ENCODE measurements at regions of chr7 and their contacts with region 1.

Region 1: DNA sequence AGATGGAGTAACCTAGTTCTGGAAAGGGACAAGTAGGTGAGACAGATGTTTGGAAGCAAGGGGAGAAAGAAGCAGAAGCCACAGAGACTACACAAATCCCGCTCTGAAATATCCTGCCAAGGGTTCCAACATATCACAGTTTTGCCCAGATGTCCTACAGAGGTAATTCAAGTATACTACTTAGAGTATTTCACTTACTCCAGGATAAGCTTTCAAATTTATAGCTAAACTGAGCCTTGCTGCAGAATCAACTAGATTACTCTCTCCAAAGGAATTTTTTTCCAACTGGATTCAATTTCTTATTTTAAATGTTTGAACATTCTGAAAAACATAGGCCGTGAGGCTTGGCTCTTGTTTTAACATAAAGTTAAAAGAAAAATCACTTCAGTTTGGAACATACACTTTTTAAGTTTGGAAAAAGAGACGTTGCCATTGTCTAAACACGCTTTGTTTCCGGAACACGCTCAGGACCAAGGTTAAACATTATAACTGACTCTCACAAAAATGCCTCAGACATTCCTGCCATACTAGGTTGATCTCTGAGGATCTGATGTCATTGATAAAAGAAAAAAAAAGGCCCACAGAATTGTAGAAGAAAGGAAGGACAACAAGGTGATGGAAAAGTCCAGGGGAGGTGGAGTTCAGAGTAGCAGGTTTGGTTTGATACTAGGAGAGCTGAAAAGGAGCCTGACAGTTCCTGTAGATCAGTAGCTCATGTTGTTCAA is 74.8 kb downstream of the FAM185A start:
- DNase-seq: no peak
- ATAC-seq: no peak
- H3K4me3 ChIP-seq: no peak overlapping the region
- H3K27ac ChIP-seq: no peak overlapping the region
- H3K4me1 ChIP-seq: no peaks in the 10 kb centered on the region
- H3K27me3 ChIP-seq: no peaks in the 10 kb centered on the region
- CTCF ChIP-seq: no peak
- EP300 ChIP-seq: no peak
- POLR2A ChIP-seq: no peak
- RAD21 ChIP-seq: no peak

Region 2: GRCh38 chr7:102874166-102874829 is 50.7 kb after region 1 on chr7:
- CTCF ChIA-PET with region 1: no interaction called
- POLR2A ChIA-PET with region 1: no interaction called
- RAD21 ChIA-PET with region 1: no interaction called
- SMC1A ChIA-PET with region 1: no interaction called
- in situ Hi-C with region 1: no loop called
- intact Hi-C with region 1: loop called (anchors 2 kb)
- DNase-seq: peak; percentile 51
- ATAC-seq: peak; percentile 99
- H3K4me3 ChIP-seq: no peak overlapping the region
- H3K27ac ChIP-seq: no peak overlapping the region
- H3K4me1 ChIP-seq: no peaks in the 10 kb centered on the region
- H3K27me3 ChIP-seq: no peaks in the 10 kb centered on the region; a peak in 1 of 4 replicates
- CTCF ChIP-seq: no peak
- EP300 ChIP-seq: no peak
- POLR2A ChIP-seq: no peak
- RAD21 ChIP-seq: no peak

Region 3: GRCh38 chr7:103009466-103010185 is 186.1 kb after region 1 on chr7:
- CTCF ChIA-PET with region 1: no interaction called
- POLR2A ChIA-PET with region 1: no interaction called
- RAD21 ChIA-PET with region 1: no interaction called
- SMC1A ChIA-PET with region 1: no interaction called
- in situ Hi-C with region 1: no loop called
- intact Hi-C with region 1: no loop called
- DNase-seq: no peak
- ATAC-seq: no peak
- H3K4me3 ChIP-seq: no peak overlapping the region
- H3K27ac ChIP-seq: no peak overlapping the region
- H3K4me1 ChIP-seq: no peaks in the 10 kb centered on the region
- H3K27me3 ChIP-seq: no peaks in the 10 kb centered on the region
- CTCF ChIP-seq: no peak
- EP300 ChIP-seq: no peak
- POLR2A ChIP-seq: no peak
- RAD21 ChIP-seq: no peak

Measured in GM12878 (cell line).